ENCODE measurements at regions of chr12 and their contacts with region 1.

Region 1: DNA sequence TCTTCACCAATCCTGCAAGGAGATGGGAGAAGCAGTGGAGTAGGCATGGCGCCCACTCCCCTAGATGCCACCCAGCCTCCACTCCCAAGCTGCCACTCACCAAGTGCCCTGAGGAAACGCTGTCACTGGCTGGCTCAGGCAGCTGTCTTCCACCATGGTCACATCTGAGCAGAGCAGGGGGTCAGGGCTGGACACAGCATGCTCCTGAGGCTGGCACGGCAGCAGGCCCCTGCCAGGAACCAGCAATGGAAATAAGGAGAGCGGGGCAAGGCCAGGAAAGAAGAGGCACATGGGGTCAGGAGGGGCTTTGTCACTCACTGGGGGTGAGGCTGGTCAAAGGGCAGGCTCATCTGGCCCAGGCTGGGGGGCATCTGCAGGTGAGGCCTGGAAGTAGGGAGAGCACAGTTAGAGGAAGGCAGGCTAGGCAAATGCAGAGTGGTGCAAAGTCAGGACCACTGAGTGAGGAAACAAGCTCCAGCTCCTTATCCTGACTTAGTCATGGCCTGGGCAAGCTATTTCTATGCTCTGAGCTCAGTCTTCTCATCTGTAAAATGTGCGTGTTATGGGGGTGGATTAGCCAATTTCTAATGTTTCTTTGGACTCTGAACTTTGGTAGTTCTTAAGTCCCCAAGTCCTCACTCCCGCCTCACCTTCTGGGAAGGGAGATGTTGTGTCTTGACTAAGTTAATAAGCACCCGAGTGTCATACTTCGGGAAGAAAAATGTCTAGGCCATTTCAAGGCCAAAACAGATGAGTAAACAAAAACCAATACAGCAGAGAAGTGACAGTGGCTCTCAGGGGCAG is 8.0 kb downstream of the NAB2 start:
- DNase-seq: no peak
- H3K4me3 ChIP-seq: no peak overlapping the region
- H3K27ac ChIP-seq: no peak overlapping the region
- H3K4me1 ChIP-seq: no peaks in the 10 kb centered on the region
- H3K27me3 ChIP-seq: no peaks in the 10 kb centered on the region
- CTCF ChIP-seq: no peak

Region 2: DNA sequence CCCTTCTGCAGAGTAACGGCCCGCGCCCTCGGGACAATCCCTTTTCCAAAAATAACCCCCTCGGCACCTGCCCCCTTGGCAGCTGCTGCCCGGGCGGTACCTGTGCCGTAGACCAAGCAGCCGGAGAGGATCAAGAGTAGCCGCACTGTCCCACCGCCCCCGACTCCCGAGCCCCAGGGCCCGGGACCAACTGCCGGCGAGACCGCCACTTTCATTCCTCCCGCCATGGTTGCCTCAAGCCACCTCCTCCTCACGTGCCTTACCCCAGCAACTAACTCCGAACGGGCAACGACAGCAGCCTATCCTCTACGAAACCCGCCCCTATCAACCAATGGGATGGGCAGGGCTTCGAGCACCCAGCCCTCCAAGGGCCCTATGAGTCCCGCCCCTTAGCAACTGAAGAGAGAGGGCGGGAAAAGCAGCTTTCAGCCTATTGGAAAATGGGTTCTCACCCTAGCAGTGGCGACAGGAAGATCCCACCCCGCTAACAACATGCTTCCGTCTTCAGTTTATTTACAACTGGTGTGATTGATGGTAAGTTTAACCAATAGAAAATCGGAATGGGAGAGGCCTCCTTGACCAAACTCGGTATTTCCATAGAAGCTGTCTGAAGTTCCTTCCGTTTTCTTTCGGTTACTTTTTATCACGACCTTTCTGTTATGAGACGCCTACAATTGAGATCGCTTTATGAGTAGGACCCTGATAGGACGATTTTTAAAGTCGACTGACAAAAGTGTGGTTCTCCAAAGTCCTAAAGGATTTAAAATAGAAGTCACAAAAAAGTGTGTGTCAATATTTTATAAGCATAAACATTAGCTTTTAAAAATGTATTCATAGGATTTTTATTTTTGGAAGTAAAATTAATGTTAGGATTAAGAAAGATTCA is 18.2 kb before region 1 on chr12 and contains the start of gene NEMP1:
- CTCF ChIA-PET with region 1: interaction called, 3 read pairs
- POLR2A ChIA-PET with region 1: interaction called, 20 read pairs
- intact Hi-C with region 1: no loop called
- DNase-seq: peak; percentile 96 to 100
- H3K4me3 ChIP-seq: peak within 1 kb of the TSS; percentile 90
- H3K27ac ChIP-seq: peak within 1 kb of the TSS; percentile 59
- H3K4me1 ChIP-seq: peaks cover 13% of the 10 kb centered on the region
- H3K27me3 ChIP-seq: no peaks in the 10 kb centered on the region
- CTCF ChIP-seq: no peak
- total RNA-seq, gene NEMP1: 28.9 and 36.6 TPM in 2 replicates

Measured in PC-9 (cell line).